Posterior cingulate gyrus (tissue), 11 donors: ENCODE measurements at regions of chr6 and their contacts with region 1.

Region 1: DNA sequence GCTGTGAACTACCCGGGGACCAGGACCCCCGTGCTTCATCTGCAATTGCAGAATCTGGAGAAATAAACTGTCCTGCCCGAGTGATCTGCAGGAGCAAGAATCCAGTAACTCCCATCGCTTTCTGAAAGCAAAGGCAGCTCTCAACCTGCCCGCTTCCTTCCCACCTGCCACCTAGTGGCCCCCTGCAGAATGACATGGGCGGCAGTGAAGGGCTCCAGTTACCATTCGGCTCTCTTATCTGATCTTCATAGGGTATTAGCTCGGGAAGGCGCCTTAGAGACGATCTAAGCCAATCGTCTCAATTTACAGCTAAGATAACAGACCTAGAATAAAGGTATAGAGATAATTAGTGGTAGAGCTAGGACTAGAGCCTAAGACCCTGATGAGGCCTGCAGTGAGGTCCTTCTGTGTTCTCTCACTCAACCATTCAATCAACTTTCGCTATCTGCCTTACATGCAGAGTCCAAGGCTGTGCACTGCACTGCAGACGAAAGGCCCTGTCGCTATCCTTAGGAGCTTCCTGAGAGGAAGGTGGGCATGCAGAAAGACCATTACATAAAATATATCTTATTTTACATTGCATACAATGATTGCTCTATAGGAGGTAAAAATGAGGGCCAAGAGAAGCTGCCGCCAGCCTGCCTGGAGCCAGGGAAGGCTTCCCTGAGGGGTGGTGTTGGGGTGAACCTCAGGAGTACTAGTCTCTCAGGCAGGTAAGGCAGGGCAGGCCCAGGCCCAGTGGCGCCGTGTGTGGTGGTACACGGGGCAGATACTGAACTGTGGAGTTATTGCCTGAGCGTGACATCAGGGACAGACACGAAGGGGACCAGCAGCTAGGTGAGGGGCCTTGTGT is 7.1 kb upstream of the PSMG4 start:
- DNase-seq: peak; percentile 82 to 97 (median 90)

Region 2: DNA sequence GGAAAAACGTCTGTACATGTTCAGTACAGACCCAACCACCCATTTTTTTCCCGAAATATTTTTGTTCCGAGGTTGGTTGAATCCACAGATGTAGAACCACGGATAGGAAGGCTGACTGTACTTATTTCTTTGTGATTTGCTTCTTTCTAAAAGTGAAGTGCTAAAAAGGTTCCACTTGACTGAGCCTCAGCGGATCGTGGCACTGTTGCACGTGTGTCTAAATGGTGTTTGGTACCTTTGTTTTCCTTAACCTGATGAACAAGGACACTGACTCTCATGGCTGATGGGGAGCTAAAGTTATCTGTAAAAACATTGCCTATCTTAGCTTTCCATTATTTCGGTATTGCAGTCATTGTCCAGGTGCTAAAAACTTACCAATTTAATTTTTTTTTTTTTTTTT is 127.0 kb before region 1 on chr6:
- intact Hi-C with region 1: loop called (anchors 2 kb)
- DNase-seq: no peak

Region 3: GRCh38 chr6:3162565-3163247 is 89.0 kb before region 1 on chr6:
- intact Hi-C with region 1: loop called (anchors 5 kb)
- DNase-seq: peak in 9 of 10 donors; percentile 45 to 95 (median 70)

Region 4: GRCh38 chr6:3592371-3592941 is 340.8 kb after region 1 on chr6:
- intact Hi-C with region 1: no loop called
- DNase-seq: no peak